ENCODE measurements at regions of chr1 and their contacts with region 1.

Region 1: GRCh38 chr1:197356723-197357533 is 88.9 kb downstream of the CRB1 start:
- DNase-seq: peak; percentile 25
- ATAC-seq: peak; percentile 79
- H3K4me3 ChIP-seq: no peak overlapping the region
- H3K27ac ChIP-seq: no peak overlapping the region
- H3K4me1 ChIP-seq: no peaks in the 10 kb centered on the region
- H3K27me3 ChIP-seq: no peaks in the 10 kb centered on the region
- CTCF ChIP-seq: peak; percentile 80

Region 2: GRCh38 chr1:196951711-196952394 is 405.1 kb before region 1 on chr1:
- CTCF ChIA-PET with region 1: no interaction called
- POLR2A ChIA-PET with region 1: no interaction called
- in situ Hi-C with region 1: no loop called
- intact Hi-C with region 1: no loop called
- DNase-seq: no peak
- ATAC-seq: no peak
- H3K4me3 ChIP-seq: no peak overlapping the region
- H3K27ac ChIP-seq: no peak overlapping the region
- H3K4me1 ChIP-seq: no peaks in the 10 kb centered on the region
- H3K27me3 ChIP-seq: no peaks in the 10 kb centered on the region
- CTCF ChIP-seq: no peak

Region 3: GRCh38 chr1:197180252-197180878 is 176.6 kb before region 1 on chr1:
- CTCF ChIA-PET with region 1: no interaction called
- POLR2A ChIA-PET with region 1: no interaction called
- in situ Hi-C with region 1: no loop called
- intact Hi-C with region 1: loop called (anchors 1 kb)
- DNase-seq: no peak
- ATAC-seq: peak; percentile 81
- H3K4me3 ChIP-seq: no peak overlapping the region
- H3K27ac ChIP-seq: no peak overlapping the region
- H3K4me1 ChIP-seq: no peaks in the 10 kb centered on the region
- H3K27me3 ChIP-seq: no peaks in the 10 kb centered on the region
- CTCF ChIP-seq: peak; percentile 69; the same call in 1 of the 2 replicates

Measured in Panc1 (cell line).